Aorta (tissue), 5 donors: ENCODE measurements at regions of chr9 and their contacts with region 1.

Region 1: GRCh38 chr9:37079370-37080164 is 40.8 kb upstream of the ZCCHC7 start:
- DNase-seq: peak; percentile 96
- ATAC-seq: peak; percentile 99
- H3K4me3 ChIP-seq: peak overlapping the region; percentile 14 to 63
- H3K27ac ChIP-seq: peak overlapping the region; percentile 6 to 34
- H3K4me1 ChIP-seq: peaks cover 1 to 3% of the 10 kb centered on the region in 2 donors
- H3K27me3 ChIP-seq: no peaks in the 10 kb centered on the region

Region 2: GRCh38 chr9:37119907-37120842 is 40.6 kb after region 1 on chr9 and contains the start of gene ZCCHC7:
- intact Hi-C with region 1: loop called (anchors 1 to 2 kb)
- DNase-seq: peak; percentile 98
- ATAC-seq: peak; percentile 100
- H3K4me3 ChIP-seq: peak within 1 kb of the TSS; percentile 55 to 86
- H3K27ac ChIP-seq: peak within 1 kb of the TSS; percentile 37 to 61
- H3K4me1 ChIP-seq: no peaks in the 10 kb centered on the region
- H3K27me3 ChIP-seq: no peaks in the 10 kb centered on the region
- total RNA-seq, gene ZCCHC7: 27.0 to 30.5 TPM